Left ventricle myocardium superior (tissue), 1 donor: ENCODE measurements at regions of chr10 and their contacts with region 1.

Region 1: DNA sequence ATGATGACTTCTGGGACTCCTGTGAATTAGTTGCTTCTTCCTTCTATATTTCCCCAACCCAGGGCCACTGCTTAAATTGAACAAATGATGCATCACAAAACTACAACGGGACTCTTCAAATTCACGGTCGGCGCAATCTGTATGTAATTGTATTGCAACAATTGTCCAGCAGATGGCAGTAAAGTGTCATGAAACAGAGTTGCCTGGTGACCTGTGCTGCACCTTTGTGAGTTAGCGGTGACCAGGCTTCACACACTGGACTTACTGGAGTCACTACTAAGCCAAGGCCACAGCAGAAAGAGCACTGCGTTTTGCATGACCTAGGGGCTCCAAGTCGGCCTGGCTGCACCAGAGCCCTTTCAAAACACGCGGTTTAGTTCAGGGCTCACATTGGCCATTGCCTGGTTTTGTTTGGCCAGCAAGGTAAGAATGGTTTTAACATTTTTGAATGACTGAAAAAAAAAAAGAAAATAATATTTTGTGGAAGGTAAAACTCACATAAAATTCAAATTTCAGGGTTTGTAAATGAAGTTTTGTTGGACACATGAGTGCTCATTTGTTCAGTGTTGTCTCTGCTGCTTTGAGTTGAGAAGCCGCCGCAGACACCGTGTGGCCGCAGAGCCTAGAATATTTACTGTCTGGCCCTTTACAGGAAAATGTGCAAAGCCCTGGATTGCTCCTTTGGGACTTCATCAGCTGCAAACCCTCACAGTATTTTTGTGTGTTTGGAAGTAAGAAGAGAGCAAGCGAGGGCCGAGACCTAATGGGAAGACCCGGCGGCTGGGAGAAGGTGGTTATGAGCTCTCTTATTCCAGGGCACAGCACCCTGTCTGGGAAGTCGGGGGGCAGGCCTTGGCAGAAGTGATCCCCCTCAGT is 23.2 kb upstream of the ZNF32 start:
- DNase-seq: peak; percentile 52
- ATAC-seq: peak; percentile 76

Region 2: GRCh38 chr10:44864637-44865288 is 1192.9 kb after region 1 on chr10:
- intact Hi-C with region 1: loop called (anchors 5 kb)
- DNase-seq: peak; percentile 96
- ATAC-seq: peak; percentile 97